ENCODE measurements at regions of chr7 and their contacts with region 1.

Region 1: DNA sequence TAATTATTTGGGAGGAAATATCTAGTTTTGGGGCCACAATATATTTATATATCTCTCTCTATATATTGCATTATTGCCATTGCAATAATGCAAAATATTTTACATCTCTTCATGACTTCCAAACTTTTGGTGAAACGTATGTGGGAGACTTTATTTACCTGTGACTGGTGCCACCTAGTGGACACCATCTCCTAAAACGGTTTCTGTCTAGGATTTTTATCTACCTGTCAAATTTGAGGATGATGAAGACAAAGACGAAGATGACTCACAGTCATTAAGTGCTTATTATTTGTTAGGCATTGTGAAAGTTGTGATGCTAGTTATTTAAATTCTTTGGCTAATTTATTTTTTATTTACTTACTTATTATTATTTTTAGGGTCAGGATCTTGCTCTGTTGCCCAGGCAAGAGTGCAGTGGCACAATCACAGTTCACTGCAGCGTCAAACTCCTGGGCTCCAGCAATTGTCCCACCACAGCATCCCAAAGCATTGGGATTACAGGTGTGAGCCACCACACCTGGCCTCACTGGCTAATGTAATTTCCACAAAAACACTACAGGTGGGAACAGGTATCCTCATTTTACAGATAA is 18.7 kb upstream of the CBLL1 start:
- DNase-seq: peak; percentile 68
- ATAC-seq: no peak
- H3K4me3 ChIP-seq: no peak overlapping the region
- H3K27ac ChIP-seq: no peak overlapping the region
- H3K4me1 ChIP-seq: peaks cover 3% of the 10 kb centered on the region; the same call in 1 of the 2 replicates
- H3K27me3 ChIP-seq: peaks cover 4% of the 10 kb centered on the region
- CTCF ChIP-seq: peak; percentile 71
- POLR2A ChIP-seq: no peak
- RAD21 ChIP-seq: peak; percentile 76

Region 2: DNA sequence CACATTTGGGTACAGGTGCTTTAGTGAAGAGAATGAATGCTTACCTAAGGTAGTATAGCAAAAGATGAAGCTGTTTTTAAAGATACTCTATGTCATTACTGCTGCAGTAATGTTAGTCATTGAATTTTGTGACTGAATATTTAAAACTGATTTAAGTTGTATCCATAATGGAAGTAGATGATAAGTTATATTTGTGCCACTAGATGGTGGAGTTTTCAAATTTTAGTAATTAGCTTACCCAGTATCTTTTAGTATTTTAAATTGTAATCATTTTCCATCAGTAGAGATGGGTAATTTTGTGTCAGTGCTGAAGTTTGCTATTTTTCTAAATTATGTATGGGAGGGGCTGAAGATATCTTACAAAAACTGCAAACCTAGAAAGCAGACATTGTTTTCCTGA is 531.2 kb before region 1 on chr7:
- CTCF ChIA-PET with region 1: no interaction called
- POLR2A ChIA-PET with region 1: no interaction called
- dilution Hi-C with region 1: no loop called
- in situ Hi-C with region 1: loop called (anchors 10 kb)
- intact Hi-C with region 1: no loop called
- DNase-seq: peak; percentile 11
- ATAC-seq: no peak
- H3K4me3 ChIP-seq: no peak overlapping the region
- H3K27ac ChIP-seq: no peak overlapping the region
- H3K4me1 ChIP-seq: no peaks in the 10 kb centered on the region
- H3K27me3 ChIP-seq: no peaks in the 10 kb centered on the region
- CTCF ChIP-seq: 0 out of 2 replicates have a peak, but pooled peaks have one; percentile 21
- POLR2A ChIP-seq: no peak
- RAD21 ChIP-seq: no peak

Region 3: GRCh38 chr7:107201795-107202450 is 523.3 kb before region 1 on chr7:
- CTCF ChIA-PET with region 1: no interaction called
- POLR2A ChIA-PET with region 1: no interaction called
- dilution Hi-C with region 1: no loop called
- in situ Hi-C with region 1: loop called (anchors 10 kb)
- intact Hi-C with region 1: loop called (anchors 5 kb)
- DNase-seq: peak; percentile 18
- ATAC-seq: peak; percentile 37; the same call in 1 of the 2 replicates
- H3K4me3 ChIP-seq: no peak overlapping the region
- H3K27ac ChIP-seq: no peak overlapping the region
- H3K4me1 ChIP-seq: no peaks in the 10 kb centered on the region
- H3K27me3 ChIP-seq: no peaks in the 10 kb centered on the region
- CTCF ChIP-seq: peak; percentile 35; the same call in 1 of the 2 replicates
- POLR2A ChIP-seq: no peak
- RAD21 ChIP-seq: peak; percentile 52

Region 4: GRCh38 chr7:107469929-107470328 is 255.3 kb before region 1 on chr7 and contains the start of gene GPR22:
- CTCF ChIA-PET with region 1: interaction called, 4 read pairs
- POLR2A ChIA-PET with region 1: no interaction called
- dilution Hi-C with region 1: loop called (anchors 25 kb)
- in situ Hi-C with region 1: loop called (anchors 5 kb)
- intact Hi-C with region 1: no loop called
- DNase-seq: no peak
- ATAC-seq: no peak
- H3K4me3 ChIP-seq: no peak within 1 kb of the TSS
- H3K27ac ChIP-seq: no peak within 1 kb of the TSS
- H3K4me1 ChIP-seq: no peaks in the 10 kb centered on the region; the same call in 1 of the 2 replicates
- H3K27me3 ChIP-seq: no peaks in the 10 kb centered on the region
- CTCF ChIP-seq: no peak
- POLR2A ChIP-seq: no peak
- RAD21 ChIP-seq: no peak
- total RNA-seq, gene GPR22: not detected in 2 replicates

Region 5: DNA sequence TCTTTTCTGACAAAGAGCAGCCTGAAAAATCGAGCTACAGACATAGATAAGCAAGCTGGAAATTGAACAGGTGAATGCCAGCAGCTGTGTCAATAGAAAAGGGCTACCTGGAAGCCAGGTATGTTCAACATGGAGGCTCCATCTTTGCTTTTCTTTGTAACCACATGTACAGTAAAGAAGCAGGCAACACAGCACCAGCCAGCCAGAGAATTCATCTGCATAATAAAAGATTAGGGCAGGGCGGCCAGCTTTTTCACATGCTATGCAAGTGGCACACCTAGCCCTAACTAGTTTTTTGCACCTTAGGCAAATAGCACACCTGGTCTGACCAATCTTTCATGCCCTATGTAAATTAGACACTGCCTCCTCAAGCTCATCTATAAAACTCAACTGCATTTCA is 187.2 kb before region 1 on chr7:
- CTCF ChIA-PET with region 1: no interaction called
- POLR2A ChIA-PET with region 1: no interaction called
- dilution Hi-C with region 1: no loop called
- in situ Hi-C with region 1: no loop called
- intact Hi-C with region 1: no loop called
- DNase-seq: no peak
- ATAC-seq: no peak
- H3K4me3 ChIP-seq: no peak overlapping the region
- H3K27ac ChIP-seq: no peak overlapping the region
- H3K4me1 ChIP-seq: no peaks in the 10 kb centered on the region
- H3K27me3 ChIP-seq: no peaks in the 10 kb centered on the region
- CTCF ChIP-seq: no peak
- POLR2A ChIP-seq: no peak
- RAD21 ChIP-seq: no peak

Region 6: DNA sequence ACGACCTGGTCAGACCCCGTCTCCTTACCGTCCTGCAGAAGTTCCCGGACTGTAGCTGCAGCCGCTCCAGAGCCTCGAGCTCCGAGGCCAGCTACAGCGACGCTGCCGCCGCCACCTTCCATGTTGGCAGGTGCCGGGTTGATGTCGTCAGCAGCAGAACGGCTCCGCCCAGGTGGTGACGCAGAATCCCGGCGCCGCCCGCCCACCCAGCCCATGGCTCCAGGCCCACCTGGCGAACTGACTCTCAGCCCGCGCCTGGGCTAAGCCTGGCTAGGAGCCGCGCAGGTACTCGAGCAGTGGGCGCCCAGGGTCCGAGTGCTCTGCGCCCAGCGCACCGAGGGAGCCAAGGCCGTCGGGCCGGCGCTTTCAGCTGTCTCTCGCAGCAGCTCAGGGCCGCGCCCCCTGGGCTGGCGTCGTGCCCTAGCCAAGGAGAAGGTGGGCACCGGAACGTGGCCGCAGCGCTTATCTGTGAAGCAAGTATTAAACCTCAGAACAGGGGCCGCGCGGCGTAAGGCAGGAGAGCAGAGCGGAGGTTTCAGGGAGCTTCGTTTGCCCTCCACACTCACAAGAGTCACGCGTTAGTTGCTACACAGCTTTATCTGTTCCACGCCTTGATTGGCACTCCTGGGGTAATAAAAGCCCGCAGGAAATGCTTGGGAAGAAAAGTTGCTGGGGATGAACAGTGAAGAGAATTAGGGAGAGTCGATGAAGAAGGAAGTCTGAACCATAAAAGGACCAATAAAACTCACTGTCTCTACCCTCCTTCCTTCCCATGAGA is 161.3 kb before region 1 on chr7 and contains the starts of genes COG5 and DUS4L:
- CTCF ChIA-PET with region 1: no interaction called
- POLR2A ChIA-PET with region 1: no interaction called
- dilution Hi-C with region 1: no loop called
- in situ Hi-C with region 1: no loop called
- intact Hi-C with region 1: no loop called
- DNase-seq: peak; percentile 79
- ATAC-seq: peak; percentile 85
- H3K4me3 ChIP-seq: peak within 1 kb of the TSS; percentile 90
- H3K27ac ChIP-seq: peak within 1 kb of the TSS; percentile 88
- H3K4me1 ChIP-seq: peaks cover 5% of the 10 kb centered on the region; the same call in 1 of the 2 replicates
- H3K27me3 ChIP-seq: no peaks in the 10 kb centered on the region
- CTCF ChIP-seq: no peak
- POLR2A ChIP-seq: peak; percentile 61; the same call in 1 of the 2 replicates
- RAD21 ChIP-seq: no peak
- total RNA-seq, gene COG5: 27.4 and 35.8 TPM in 2 replicates
- total RNA-seq, gene DUS4L: 6.6 and 8.6 TPM in 2 replicates

Region 7: DNA sequence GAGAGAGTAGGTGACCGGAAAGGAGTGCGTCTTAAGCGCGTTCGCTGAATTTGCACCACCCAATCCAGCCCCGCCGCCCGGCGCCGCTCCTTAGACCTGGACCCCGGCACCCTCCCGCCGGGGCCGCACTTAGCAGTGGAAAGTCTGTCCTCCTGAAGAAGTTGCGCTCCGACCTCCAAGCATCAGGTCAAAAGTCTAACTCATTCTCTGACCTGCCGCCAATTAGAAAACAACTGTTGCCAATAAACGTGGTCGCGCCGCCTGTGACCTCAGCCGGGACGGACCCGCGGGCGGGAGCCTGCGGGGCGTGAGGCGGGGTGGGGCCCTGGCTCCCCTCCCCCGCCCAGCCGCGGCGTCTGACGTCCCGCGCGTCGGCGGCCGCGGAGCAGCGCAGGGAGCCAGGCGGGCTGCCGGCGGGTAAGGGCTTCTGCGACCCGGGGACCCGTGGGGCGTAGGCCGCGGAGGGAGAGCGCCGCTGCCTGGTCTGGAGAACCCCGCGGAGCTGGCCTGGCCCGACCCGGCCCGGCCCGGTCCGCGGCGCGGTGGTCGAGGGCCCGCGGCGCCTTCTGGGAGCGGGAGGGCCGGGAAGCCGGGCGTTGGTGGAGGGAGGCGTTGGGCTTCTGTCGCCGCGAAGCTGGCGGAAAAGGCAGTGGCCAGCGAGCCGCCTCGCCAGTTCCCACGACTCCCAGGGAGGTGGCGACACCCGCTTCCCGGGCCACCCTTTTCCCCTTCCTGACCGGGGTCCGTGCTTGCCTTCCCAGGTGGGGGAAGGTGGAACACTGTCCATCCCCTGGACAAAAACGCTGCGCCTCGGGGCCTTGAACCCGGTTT is 145.1 kb before region 1 on chr7 and contains the start of gene BCAP29:
- CTCF ChIA-PET with region 1: no interaction called
- POLR2A ChIA-PET with region 1: no interaction called
- dilution Hi-C with region 1: no loop called
- in situ Hi-C with region 1: no loop called
- intact Hi-C with region 1: loop called (anchors 5 kb)
- DNase-seq: peak; percentile 25
- ATAC-seq: peak; percentile 98
- H3K4me3 ChIP-seq: peak within 1 kb of the TSS; percentile 93
- H3K27ac ChIP-seq: peak within 1 kb of the TSS; percentile 74
- H3K4me1 ChIP-seq: no peaks in the 10 kb centered on the region
- H3K27me3 ChIP-seq: no peaks in the 10 kb centered on the region
- CTCF ChIP-seq: 0 out of 2 replicates have a peak, but pooled peaks have one; percentile 9
- POLR2A ChIP-seq: peak; percentile 80
- RAD21 ChIP-seq: no peak
- total RNA-seq, gene BCAP29: 33.0 and 119 TPM in 2 replicates

Measured in IMR-90 (cell line).